ENCODE measurements at regions of chr16 and their contacts with region 1.

Region 1: DNA sequence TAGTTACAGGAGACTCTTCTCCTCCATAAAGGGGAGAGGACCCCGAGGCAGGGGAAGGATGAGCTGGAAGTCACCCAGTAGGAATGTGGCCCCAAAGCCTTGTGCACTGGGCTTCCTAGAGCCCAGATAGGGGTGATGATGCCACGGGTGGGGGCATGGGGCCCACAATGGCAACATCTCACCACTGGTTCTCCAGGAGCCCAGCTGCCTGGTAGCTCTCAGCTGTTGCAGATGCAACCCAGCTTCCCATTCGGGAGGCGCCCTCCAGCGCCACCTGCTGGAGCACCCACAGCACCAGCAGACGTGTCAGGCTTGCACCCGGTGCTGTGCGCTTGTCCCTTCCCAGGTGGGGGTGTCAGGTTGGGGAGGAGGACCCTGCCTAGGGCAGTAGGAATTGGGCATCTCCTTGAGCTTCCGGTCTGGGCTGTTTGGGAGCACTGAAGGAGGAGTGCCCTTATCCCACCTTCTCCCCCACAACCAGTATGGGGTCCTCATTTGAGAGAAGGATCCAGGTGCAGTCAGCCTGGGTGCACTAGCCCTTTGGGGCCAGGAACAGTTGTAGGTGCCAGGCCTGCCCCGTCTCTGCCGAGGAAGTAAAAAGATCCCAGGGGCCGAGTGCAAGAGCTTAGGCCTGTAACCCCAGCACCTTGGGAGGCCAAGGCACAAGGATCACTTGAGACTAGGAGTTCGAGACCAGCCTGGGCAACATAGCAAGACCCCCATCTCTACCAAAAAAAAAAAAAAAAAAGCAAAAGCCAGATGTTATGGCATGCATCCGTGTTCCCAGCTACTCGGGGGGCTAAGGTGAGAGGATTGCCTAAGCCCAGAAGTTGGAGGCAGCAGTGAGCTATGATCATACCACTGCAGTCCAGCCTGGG is 14.4 kb downstream of the CDIPT start:
- DNase-seq: peak; percentile 64 to 90 (median 80)
- ATAC-seq: peak; percentile 96 to 98
- H3K4me3 Mint-ChIP-seq: peak overlapping the region in 1 of 10 donors; percentile 19
- H3K27ac Mint-ChIP-seq: peak overlapping the region; percentile 40 to 88 (median 68)
- H3K4me1 Mint-ChIP-seq: peaks cover 6 to 12% (median 8%) of the 10 kb centered on the region in 4 donors
- H3K27me3 Mint-ChIP-seq: no peaks in the 10 kb centered on the region

Region 2: DNA sequence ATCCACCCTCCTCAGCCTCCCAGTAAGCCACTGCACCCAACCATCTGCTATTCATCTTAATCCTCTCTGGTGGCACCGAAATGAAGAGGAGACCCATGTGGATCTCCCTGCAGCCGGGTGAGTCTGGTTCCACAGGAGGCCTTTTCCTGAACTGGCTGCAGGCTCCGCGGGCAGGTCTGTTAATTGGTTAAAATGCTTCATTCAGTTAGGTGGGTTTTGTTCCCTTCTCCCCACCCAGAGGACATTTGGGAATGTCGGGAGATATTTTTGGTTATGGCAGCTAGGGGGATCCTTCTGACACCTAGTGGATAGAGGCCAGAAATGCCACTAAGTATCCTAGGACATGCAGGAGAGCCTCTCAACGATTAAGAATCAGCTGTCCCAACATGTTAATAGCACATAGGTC is 119.5 kb before region 1 on chr16:
- POLR2A ChIA-PET with region 1: no interaction called
- DNase-seq: no peak
- ATAC-seq: peak in 1 of 2 donors; percentile 33
- H3K4me3 Mint-ChIP-seq: no peak overlapping the region
- H3K27ac Mint-ChIP-seq: peak overlapping the region in 4 of 10 donors; percentile 40 to 72 (median 49)
- H3K4me1 Mint-ChIP-seq: peaks cover 14 to 38% (median 32%) of the 10 kb centered on the region in 4 donors
- H3K27me3 Mint-ChIP-seq: no peaks in the 10 kb centered on the region

Region 3: DNA sequence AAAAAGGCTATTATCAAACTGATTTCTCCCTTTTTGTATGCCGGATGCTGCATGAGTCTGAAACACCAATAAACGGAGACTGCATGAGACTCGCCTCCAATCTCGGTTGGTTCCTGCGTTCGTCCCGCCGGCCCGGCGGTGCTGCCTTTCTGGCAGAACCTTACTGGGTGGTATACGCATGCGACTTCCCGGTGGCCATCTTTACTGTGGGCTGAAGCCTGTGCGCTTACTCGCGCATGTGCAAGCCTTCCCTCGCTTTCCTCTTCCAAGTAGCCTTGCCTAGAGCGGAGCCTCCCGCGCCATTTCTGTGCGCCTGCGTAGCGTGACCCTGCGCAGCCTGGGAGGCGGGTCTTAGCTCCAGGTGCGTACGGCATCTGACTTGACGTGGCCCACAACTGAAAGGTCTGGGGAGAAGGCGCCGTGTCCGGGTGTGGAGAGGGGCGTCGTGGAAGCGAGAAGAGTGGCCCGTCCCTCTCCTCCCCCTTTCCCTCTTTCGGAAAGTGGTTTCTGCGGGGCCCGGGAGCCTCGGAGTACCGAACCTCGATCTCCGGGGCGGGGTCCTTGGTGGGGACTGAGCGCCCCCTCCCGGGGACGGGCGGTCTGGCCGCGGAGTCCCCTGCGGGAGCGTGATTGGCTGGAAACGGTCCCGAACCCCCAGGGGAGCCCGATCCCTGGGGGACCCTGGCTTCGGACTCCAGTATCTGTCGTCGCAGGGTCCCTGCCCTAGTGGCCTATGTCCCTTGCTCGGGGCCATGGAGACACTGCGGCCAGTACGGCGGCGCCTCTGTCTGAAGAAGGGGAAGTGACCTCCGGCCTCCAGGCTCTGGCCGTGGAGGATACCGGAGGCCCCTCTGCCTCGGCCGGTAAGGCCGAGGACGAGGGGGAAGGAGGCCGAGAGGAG is 32.6 kb before region 1 on chr16 and contains the start of gene PAGR1:
- POLR2A ChIA-PET with region 1: interaction called, 102 read pairs
- DNase-seq: peak; percentile 91 to 100 (median 99)
- ATAC-seq: peak; percentile 71 to 80
- H3K4me3 Mint-ChIP-seq: peak within 1 kb of the TSS; percentile 93 to 100 (median 96)
- H3K27ac Mint-ChIP-seq: peak within 1 kb of the TSS; percentile 93 to 100 (median 98)
- H3K4me1 Mint-ChIP-seq: peaks cover 44 to 93% (median 70%) of the 10 kb centered on the region in 4 donors
- H3K27me3 Mint-ChIP-seq: peaks cover 0 to 1% (median 0%) of the 10 kb centered on the region in 5 donors
- polyA plus RNA-seq, gene PAGR1: 51.4 to 57.5 (median 55.5) TPM

Region 4: GRCh38 chr16:29825145-29826044 is 23.3 kb before region 1 on chr16:
- POLR2A ChIA-PET with region 1: interaction called, 102 read pairs
- DNase-seq: peak in 3 of 10 donors; percentile 44 to 61 (median 47)
- ATAC-seq: peak in 1 of 2 donors; percentile 12
- H3K4me3 Mint-ChIP-seq: peak overlapping the region; percentile 65 to 86 (median 81)
- H3K27ac Mint-ChIP-seq: peak overlapping the region; percentile 72 to 99 (median 95)
- H3K4me1 Mint-ChIP-seq: peaks cover 17 to 89% (median 77%) of the 10 kb centered on the region in 4 donors
- H3K27me3 Mint-ChIP-seq: no peaks in the 10 kb centered on the region

Region 5: GRCh38 chr16:29883987-29884386 is 35.3 kb after region 1 on chr16:
- POLR2A ChIA-PET with region 1: no interaction called
- DNase-seq: no peak
- ATAC-seq: no peak
- H3K4me3 Mint-ChIP-seq: no peak overlapping the region
- H3K27ac Mint-ChIP-seq: no peak overlapping the region
- H3K4me1 Mint-ChIP-seq: no peaks in the 10 kb centered on the region
- H3K27me3 Mint-ChIP-seq: peaks cover 4 to 28% (median 22%) of the 10 kb centered on the region in 5 donors

Measured in naive thymus-derived CD8-positive, alpha-beta T cell (primary cell).